Esophagus muscularis mucosa (tissue), 4 donors: ENCODE measurements at regions of chr1 and their contacts with region 1.

Region 1: GRCh38 chr1:187070076-187070475 is 241.3 kb downstream of the PLA2G4A start:
- DNase-seq: no peak
- H3K4me3 ChIP-seq: no peak overlapping the region
- H3K27ac ChIP-seq: no peak overlapping the region
- H3K4me1 ChIP-seq: no peaks in the 10 kb centered on the region
- H3K27me3 ChIP-seq: no peaks in the 10 kb centered on the region
- CTCF ChIP-seq: no peak
- EP300 ChIP-seq: no peak
- POLR2A ChIP-seq: no peak

Region 2: GRCh38 chr1:187091666-187092065 is 21.6 kb after region 1 on chr1:
- intact Hi-C with region 1: loop called (anchors 2 kb)
- DNase-seq: no peak
- H3K4me3 ChIP-seq: no peak overlapping the region
- H3K27ac ChIP-seq: no peak overlapping the region
- H3K4me1 ChIP-seq: no peaks in the 10 kb centered on the region
- H3K27me3 ChIP-seq: no peaks in the 10 kb centered on the region
- CTCF ChIP-seq: no peak
- EP300 ChIP-seq: no peak
- POLR2A ChIP-seq: no peak